HEK293 (cell line): ENCODE measurements at regions of chr11 and their contacts with region 1.

Region 1: GRCh38 chr11:10933455-10934292 is 75.8 kb upstream of the ZBED5 start:
- H3K4me3 ChIP-seq: peak overlapping the region; percentile 43
- H3K27ac ChIP-seq: no peak overlapping the region; the same call in 1 of the 2 replicates
- H3K4me1 ChIP-seq: no peaks in the 10 kb centered on the region
- CTCF ChIP-seq: peak; percentile 79

Region 2: DNA sequence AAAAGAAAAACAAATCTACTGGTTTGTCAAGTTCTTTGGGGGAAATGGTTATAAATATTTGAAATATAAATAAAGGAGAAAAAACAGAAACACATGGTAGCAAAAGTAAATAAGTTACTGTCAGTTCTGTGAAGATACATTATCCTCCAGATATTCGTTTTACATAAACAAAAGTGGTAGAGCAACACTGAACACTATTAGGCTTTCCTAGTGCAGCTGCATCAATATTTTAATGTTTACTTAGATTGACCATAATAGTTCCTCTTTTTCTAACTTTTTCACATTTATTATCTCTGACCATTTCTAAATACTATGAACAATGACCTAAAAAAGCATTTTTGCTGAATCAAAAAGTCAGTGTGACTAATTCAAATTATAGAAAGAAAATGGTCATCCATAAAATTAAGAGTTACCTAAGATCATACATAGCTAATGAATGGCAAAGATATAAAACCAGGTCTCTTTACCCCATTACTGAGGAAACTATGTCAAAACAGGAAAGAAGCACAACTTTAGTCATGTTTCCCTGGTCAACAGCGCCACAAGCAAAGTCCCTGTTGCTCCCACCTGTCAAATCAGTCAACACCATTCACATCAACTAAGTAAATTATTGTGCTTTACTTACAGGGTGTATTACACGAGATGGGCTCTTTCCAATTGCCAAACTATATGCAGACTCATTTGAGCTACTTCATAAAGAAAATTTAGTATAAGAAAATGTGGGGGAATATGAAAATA is 678.1 kb before region 1 on chr11:
- CTCF ChIA-PET with region 1: no interaction called
- POLR2A ChIA-PET with region 1: no interaction called
- H3K4me3 ChIP-seq: no peak overlapping the region
- H3K27ac ChIP-seq: no peak overlapping the region
- H3K4me1 ChIP-seq: no peaks in the 10 kb centered on the region; the same call in 1 of the 2 replicates
- CTCF ChIP-seq: no peak

Region 3: DNA sequence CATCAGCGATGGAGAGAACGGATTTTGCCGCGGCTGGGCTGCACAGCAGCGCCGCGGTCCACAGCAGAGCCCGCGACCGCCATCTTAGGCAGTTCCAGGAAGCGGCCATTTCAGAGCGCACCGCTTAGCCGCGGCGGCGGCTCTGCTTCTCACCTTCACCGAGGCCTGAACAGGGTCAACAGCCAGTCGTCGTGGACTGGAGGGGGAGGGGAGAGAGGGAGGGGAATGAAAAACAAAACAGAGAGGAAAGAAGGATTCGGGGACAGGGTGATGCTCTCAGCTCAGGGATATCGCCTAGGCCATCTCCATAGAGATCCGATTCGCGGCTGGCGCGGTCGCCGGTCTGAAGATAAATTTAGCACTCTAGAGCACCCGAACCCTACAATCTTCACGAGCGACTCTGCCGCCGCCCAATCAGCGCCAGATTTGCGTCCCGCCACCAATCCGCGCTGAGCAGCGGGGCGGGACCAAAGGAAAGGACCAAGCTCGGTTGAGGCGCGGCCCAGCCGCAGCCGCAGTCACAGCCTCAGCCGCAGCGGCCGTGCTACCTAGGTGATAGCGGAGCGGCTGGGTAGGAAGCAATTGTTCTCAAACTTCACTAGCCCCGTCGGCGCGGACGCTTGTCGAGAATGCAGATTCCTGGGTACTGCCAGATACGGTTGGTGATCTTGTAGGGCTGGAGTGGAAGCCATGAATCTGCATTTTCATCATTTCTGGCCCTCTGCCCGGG is 75.8 kb before region 1 on chr11 and contains the start of gene ZBED5:
- CTCF ChIA-PET with region 1: interaction called, 4 read pairs
- POLR2A ChIA-PET with region 1: interaction called, 17 read pairs
- H3K4me3 ChIP-seq: peak within 1 kb of the TSS; percentile 90
- H3K27ac ChIP-seq: peak within 1 kb of the TSS; percentile 77
- H3K4me1 ChIP-seq: no peaks in the 10 kb centered on the region
- CTCF ChIP-seq: peak; percentile 70

Region 4: GRCh38 chr11:10943968-10944367 is 10.3 kb after region 1 on chr11:
- CTCF ChIA-PET with region 1: interaction called, 23 read pairs
- POLR2A ChIA-PET with region 1: interaction called, 3 read pairs
- H3K4me3 ChIP-seq: no peak overlapping the region
- H3K27ac ChIP-seq: no peak overlapping the region
- H3K4me1 ChIP-seq: no peaks in the 10 kb centered on the region
- CTCF ChIP-seq: no peak

Region 5: GRCh38 chr11:10975287-10975721 is 41.6 kb after region 1 on chr11:
- CTCF ChIA-PET with region 1: no interaction called
- POLR2A ChIA-PET with region 1: no interaction called
- H3K4me3 ChIP-seq: no peak overlapping the region
- H3K27ac ChIP-seq: no peak overlapping the region
- H3K4me1 ChIP-seq: no peaks in the 10 kb centered on the region
- CTCF ChIP-seq: no peak

Region 6: GRCh38 chr11:11016068-11016467 is 82.4 kb after region 1 on chr11:
- CTCF ChIA-PET with region 1: interaction called, 150 read pairs
- POLR2A ChIA-PET with region 1: interaction called, 4 read pairs
- H3K4me3 ChIP-seq: no peak overlapping the region
- H3K27ac ChIP-seq: no peak overlapping the region
- H3K4me1 ChIP-seq: no peaks in the 10 kb centered on the region
- CTCF ChIP-seq: no peak

Region 7: DNA sequence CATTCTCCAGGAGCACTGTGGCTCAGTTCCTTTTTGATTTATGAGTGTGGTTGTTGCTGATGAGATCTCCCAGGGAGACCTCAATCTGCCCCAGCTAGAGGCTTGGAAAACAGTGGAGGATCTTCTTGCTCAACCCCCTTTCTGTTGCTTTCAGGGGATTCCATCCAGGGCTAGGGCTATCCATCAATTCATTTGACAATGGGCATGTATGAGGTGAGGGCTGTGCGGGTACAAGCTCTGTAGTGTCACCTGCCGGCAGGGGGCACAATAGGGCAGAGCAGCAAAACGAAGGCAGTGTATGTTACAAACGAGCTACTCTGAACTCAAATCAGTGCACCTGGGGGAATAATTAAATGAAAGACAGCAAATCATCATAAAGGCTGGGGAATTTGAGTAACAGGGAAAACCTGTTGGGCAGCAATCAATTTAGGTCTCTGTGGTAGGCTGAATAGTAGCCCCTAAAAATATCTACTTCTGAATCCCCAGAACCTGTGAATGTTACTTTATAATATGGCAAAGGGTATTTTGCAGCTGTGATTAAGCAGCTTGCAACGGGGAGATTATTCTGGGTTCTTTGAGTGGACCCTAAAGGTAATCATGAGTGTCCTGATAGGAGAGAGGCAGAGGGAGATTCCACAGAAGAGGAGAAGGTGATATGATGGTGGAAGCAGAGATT is 94.5 kb after region 1 on chr11:
- CTCF ChIA-PET with region 1: interaction called, 150 read pairs
- POLR2A ChIA-PET with region 1: interaction called, 7 read pairs
- H3K4me3 ChIP-seq: no peak overlapping the region
- H3K27ac ChIP-seq: no peak overlapping the region
- H3K4me1 ChIP-seq: no peaks in the 10 kb centered on the region
- CTCF ChIP-seq: no peak

Region 8: GRCh38 chr11:11787305-11788062 is 853.8 kb after region 1 on chr11:
- CTCF ChIA-PET with region 1: interaction called, 12 read pairs
- POLR2A ChIA-PET with region 1: no interaction called
- H3K4me3 ChIP-seq: no peak overlapping the region
- H3K27ac ChIP-seq: no peak overlapping the region
- H3K4me1 ChIP-seq: no peaks in the 10 kb centered on the region
- CTCF ChIP-seq: peak; percentile 55